Mammary epithelial cell (primary cell): ENCODE measurements at regions of chr6 and their contacts with region 1.

Region 1: GRCh38 chr6:87714093-87714809 is 12.2 kb upstream of the AKIRIN2 start:
- DNase-seq: peak; percentile 97
- H3K4me3 ChIP-seq: no peak overlapping the region
- H3K27ac ChIP-seq: peak overlapping the region; percentile 53
- H3K4me1 ChIP-seq: peaks cover 28% of the 10 kb centered on the region
- H3K27me3 ChIP-seq: no peaks in the 10 kb centered on the region
- CTCF ChIP-seq: no peak

Region 2: DNA sequence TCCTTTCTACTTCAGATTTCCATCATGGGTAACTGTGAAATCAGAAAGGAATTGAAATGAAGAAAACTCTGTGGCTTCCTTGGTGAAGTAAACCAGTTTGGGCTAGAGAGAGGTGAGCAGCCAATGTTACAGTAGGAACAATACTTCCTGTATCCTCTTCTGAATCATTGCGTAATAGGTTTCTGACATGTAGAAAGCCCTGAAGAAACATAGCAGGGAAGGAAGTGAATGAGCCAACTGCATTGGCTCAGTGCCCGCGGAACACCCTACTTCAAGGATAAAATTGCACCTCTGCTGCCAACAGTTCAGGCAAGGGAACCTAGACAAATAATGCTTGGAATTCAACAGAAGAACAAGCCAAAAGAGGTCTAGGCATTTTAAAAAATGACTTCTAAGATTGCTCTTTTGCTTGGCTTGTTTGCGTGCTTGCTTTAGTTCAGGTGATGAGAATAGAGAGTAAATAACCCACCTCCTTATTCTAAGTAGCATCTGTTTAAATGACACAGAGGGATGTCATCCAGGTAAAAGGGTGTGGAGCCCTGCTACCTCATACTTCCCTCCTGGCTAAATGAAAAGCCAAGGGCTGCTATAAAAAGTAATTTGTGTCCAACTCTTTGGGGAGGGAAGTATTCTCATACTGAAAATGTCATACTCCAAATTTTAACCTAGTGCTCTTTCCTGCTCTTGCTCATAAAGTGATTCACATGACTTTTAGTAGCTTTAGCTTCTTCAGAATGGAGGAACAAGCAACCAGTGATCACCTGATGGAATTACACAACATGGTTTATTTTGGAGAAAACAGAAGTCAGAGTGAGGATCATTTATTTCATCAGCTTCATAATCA is 17.8 kb after region 1 on chr6:
- CTCF ChIA-PET with region 1: interaction called, 6 read pairs
- dilution Hi-C with region 1: no loop called
- in situ Hi-C with region 1: no loop called
- intact Hi-C with region 1: loop called (anchors 2 kb)
- DNase-seq: peak; percentile 98
- H3K4me3 ChIP-seq: no peak overlapping the region
- H3K27ac ChIP-seq: peak overlapping the region; percentile 92
- H3K4me1 ChIP-seq: peaks cover 44% of the 10 kb centered on the region
- H3K27me3 ChIP-seq: no peaks in the 10 kb centered on the region
- CTCF ChIP-seq: no peak

Region 3: DNA sequence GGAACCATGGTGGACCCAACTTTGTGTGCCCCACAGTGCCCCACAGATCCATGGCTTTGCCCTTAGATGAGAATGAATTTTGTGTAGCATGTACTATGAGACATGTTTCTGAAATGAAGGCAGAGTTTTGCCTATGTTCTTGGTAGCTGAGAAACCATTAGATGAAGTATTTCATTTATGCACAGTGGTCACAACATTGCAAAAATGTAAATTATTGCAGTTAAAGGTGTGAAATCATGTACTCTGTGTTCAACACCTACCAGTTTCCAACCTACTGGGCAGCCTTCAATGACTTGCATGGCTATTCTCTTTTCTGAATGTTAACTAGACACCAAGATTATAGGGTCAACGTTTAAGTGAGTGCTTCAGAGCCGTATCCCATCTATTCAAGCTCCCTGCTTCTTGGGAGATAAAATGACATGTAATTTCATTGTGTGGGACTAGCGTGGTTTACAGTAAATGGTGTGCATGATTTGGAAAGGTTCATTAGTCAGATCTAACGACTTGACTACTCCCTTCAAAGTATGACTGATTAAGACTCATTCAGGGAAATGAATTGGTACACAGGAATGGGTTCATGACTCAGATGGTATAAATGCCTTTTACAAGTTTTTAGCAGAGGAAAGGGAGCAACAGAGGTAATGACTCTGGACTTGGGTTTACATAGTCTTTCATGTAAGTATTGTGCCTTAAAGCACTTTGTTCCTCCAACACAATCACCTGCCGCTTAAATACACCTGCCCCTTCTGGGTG is 93.9 kb after region 1 on chr6:
- CTCF ChIA-PET with region 1: interaction called, 5 read pairs
- dilution Hi-C with region 1: loop called (anchors 5 kb)
- in situ Hi-C with region 1: no loop called
- intact Hi-C with region 1: no loop called
- DNase-seq: peak; percentile 93
- H3K4me3 ChIP-seq: no peak overlapping the region
- H3K27ac ChIP-seq: no peak overlapping the region
- H3K4me1 ChIP-seq: peaks cover 17% of the 10 kb centered on the region
- H3K27me3 ChIP-seq: no peaks in the 10 kb centered on the region
- CTCF ChIP-seq: no peak

Region 4: GRCh38 chr6:87860902-87861301 is 146.7 kb after region 1 on chr6:
- CTCF ChIA-PET with region 1: no interaction called
- dilution Hi-C with region 1: no loop called
- in situ Hi-C with region 1: no loop called
- intact Hi-C with region 1: no loop called
- DNase-seq: no peak
- H3K4me3 ChIP-seq: no peak overlapping the region
- H3K27ac ChIP-seq: no peak overlapping the region
- H3K4me1 ChIP-seq: no peaks in the 10 kb centered on the region
- H3K27me3 ChIP-seq: peaks cover 9% of the 10 kb centered on the region
- CTCF ChIP-seq: no peak